Left lung (tissue), 14 donors: ENCODE measurements at regions of chr1 and their contacts with region 1.

Region 1: DNA sequence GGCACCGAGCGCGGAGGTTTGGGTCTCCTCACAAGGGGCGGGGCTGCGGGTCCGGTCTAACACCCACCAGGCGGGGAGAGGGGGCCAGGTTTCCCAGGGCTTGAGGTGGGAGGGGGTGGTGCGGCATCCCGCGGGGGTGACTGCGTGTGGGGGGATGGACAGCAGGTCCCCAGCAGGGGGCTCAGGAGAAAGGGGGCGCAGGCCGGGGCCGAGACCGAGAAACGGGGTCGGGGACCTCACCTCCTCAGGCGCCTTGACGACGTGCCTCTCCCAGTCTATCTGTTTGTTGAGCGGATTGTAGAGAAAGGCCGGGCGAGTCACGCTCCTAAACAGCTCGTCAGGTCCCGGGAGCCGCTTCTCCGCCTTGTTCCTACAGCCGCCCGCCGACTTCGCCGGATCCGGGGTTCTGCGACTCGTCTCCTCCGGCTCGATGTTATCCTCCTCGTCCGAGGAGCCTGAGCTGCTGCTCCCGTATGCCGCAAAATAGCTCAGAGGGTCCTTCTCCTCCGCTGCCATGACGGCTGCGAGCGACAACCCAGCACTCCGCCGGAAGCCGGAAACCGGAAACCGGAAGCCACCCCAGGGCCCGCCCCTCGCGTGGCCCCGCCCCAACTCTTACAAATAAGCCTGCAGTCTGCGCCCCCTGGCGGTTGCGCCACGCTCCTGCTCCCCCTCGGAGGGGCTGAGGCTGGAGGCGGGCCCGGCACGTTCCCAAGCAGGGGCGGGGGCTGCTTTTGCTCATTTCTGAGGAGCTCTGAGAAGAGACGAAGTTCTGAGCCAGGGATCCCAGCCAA is at the start of gene C1orf52:
- DNase-seq: peak; percentile 95 to 99 (median 98)
- ATAC-seq: peak; percentile 99
- H3K4me3 ChIP-seq: peak within 1 kb of the TSS; percentile 86 to 94
- H3K27ac ChIP-seq: peak within 1 kb of the TSS; percentile 83 to 86
- H3K4me1 ChIP-seq: peaks cover 16 to 41% of the 10 kb centered on the region in 2 donors
- H3K27me3 ChIP-seq: no peaks in the 10 kb centered on the region
- CTCF ChIP-seq: peak; percentile 99
- polyA plus RNA-seq, gene C1orf52: 48.4 to 66.4 (median 56.5) TPM

Region 2: GRCh38 chr1:85111695-85112094 is 147.6 kb before region 1 on chr1:
- intact Hi-C with region 1: loop called in 1 of 2 experiments (anchors 5 kb)
- DNase-seq: no peak
- ATAC-seq: no peak
- H3K4me3 ChIP-seq: no peak overlapping the region
- H3K27ac ChIP-seq: no peak overlapping the region
- H3K4me1 ChIP-seq: no peaks in the 10 kb centered on the region
- H3K27me3 ChIP-seq: no peaks in the 10 kb centered on the region
- CTCF ChIP-seq: no peak

Region 3: DNA sequence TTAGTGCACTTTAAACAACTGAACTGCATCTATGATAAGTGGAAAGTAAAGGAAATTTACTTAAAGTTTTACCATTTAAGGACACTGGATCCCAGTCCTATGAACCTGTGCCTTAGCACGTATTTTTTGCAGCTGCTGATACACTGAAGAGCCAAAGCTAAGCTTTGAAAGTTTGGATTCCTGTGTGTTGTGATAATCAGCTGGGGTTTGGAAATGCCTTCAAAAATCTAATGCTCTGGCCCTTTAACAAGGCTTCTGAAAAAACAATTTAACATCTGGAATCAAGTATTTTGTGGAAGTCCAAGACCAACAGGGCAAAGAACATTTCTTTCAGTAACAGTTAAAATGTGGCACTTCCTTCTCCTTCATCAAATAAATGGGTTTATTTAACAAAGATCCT is 153.9 kb after region 1 on chr1:
- intact Hi-C with region 1: no loop called
- DNase-seq: no peak
- ATAC-seq: no peak
- H3K4me3 ChIP-seq: no peak overlapping the region
- H3K27ac ChIP-seq: no peak overlapping the region
- H3K4me1 ChIP-seq: peaks cover 0 to under 1% of the 10 kb centered on the region in 2 donors
- H3K27me3 ChIP-seq: no peaks in the 10 kb centered on the region
- CTCF ChIP-seq: no peak